Naive thymus-derived CD8-positive, alpha-beta T cell (primary cell): ENCODE measurements at regions of chr2 and their contacts with region 1.

Region 1: GRCh38 chr2:152175458-152176325 is at the start of gene STAM2:
- DNase-seq: peak; percentile 81 to 96 (median 93)
- ATAC-seq: peak; percentile 86 to 87
- H3K4me3 Mint-ChIP-seq: peak within 1 kb of the TSS; percentile 92 to 99 (median 97)
- H3K27ac Mint-ChIP-seq: peak within 1 kb of the TSS; percentile 98 to 99 (median 99)
- H3K4me1 Mint-ChIP-seq: peaks cover 19 to 42% (median 35%) of the 10 kb centered on the region in 4 donors
- H3K27me3 Mint-ChIP-seq: peaks cover 0 to 14% (median 3%) of the 10 kb centered on the region in 5 donors
- polyA plus RNA-seq, gene STAM2: 2.1 to 5.2 (median 3.9) TPM

Region 2: GRCh38 chr2:152635635-152636298 is 460.1 kb after region 1 on chr2:
- POLR2A ChIA-PET with region 1: interaction called, 12 read pairs
- DNase-seq: peak; percentile 27 to 74 (median 51)
- ATAC-seq: peak in 1 of 2 donors; percentile 66
- H3K4me3 Mint-ChIP-seq: no peak overlapping the region
- H3K27ac Mint-ChIP-seq: peak overlapping the region in 1 of 10 donors; percentile 53
- H3K4me1 Mint-ChIP-seq: peaks cover 0 to 8% (median 0%) of the 10 kb centered on the region in 4 donors
- H3K27me3 Mint-ChIP-seq: no peaks in the 10 kb centered on the region